ENCODE measurements at regions of chr12 and their contacts with region 1.

Region 1: DNA sequence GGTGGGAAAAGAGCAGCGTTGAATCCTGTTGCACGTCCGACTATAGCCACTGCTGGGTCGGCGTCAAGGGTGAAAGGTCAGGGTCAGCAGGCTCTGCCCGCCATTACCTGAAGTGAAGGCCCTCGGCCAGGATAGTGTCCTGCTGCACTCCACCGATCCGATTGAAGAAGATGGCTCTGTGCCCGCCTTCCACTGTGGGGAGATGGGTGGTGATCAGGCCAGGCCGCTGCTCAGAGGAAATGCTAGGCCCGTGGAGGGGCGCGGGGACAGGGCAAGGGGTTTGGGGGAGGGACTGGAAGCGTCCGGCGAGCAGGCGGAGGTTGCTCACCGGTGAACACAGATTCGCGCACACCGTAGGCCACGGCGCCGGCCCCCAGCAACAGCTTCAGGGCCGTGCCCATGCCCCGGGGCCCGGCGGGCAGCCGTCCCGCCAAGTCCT is 356 bp downstream of the PHB2 start:
- DNase-seq: no peak
- ATAC-seq: peak; percentile 25

Region 2: GRCh38 chr12:6914246-6914946 is 55.7 kb before region 1 on chr12 and contains the start of gene ENO2:
- intact Hi-C with region 1: no loop called
- DNase-seq: peak; percentile 81
- ATAC-seq: peak; percentile 90
- total RNA-seq, gene ENO2: 7.4 TPM

Region 3: DNA sequence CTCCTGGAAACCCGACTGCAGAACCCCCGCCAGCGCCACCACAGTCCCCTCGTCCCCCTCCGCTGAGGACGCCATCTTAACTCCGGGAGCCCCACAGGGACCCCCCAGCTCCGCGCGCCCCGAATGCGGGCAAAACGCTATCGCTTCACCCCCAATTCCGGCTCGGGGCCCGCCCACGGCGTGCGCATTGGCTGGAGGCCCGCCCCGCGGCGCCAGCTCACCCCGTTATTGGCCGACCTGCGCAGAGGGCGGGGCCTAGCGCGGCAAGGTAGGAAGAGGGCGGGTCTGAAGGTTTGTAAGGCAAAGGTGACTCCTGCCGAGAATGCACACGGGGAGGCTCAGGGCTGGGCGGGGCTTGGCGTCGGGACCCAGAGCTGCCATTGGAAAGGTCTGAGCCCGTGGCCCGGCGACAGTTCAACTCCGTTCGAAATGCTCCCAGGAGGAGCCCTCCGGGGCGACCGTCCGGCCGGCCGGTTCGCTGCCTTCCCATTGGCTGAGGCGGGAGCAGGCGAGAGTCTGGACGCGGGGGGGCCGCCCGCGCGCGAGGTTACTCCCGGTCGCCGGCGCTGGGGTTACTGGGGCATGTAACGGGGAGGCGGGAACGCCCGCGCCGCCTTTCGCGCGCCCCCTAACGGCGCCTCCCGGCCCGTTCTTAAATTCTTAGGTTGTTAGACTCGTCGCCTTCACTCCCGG is 48.4 kb after region 1 on chr12 and contains the start of gene LPCAT3:
- intact Hi-C with region 1: loop called (anchors 5 kb)
- DNase-seq: peak; percentile 99
- ATAC-seq: peak; percentile 98
- total RNA-seq, gene LPCAT3: 48.7 TPM